Right ventricle myocardium superior (tissue), 1 donor: ENCODE measurements at regions of chr1 and their contacts with region 1.

Region 1: DNA sequence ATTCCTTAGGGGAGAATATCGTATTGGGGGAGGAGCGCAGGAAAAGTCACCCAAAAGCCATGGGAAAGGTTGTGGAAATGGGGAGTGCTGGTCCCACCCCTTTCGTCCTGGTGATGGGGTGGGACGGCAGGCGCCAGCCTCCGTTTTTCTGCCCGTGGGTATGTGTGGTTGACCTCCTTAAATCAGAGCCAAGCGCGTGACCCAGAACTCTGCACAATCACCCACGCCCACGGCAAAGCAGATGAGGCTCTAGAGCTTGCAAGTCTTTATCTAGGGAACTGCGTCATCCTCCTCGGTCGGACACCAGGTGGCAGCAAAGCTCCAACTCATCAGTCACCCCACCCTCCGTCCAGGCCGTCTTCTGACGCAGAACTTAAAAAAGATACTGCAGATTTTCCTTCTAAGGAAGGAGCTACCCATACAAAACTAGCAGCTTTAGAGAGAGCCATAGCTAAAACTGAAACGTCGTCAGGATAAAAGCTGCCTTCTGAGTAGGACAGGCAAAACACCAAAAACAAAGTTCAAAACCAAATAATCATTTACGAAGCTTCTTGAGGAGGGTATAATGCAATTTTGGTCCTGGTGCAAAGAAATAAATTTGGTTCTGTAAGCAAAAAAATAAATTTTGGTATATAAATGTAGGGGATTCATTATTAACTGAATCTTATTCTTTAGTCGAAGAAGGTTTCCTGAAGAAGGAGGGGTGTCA is 62.0 kb downstream of the TBX19 start:
- DNase-seq: peak; percentile 92
- ATAC-seq: peak; percentile 99

Region 2: DNA sequence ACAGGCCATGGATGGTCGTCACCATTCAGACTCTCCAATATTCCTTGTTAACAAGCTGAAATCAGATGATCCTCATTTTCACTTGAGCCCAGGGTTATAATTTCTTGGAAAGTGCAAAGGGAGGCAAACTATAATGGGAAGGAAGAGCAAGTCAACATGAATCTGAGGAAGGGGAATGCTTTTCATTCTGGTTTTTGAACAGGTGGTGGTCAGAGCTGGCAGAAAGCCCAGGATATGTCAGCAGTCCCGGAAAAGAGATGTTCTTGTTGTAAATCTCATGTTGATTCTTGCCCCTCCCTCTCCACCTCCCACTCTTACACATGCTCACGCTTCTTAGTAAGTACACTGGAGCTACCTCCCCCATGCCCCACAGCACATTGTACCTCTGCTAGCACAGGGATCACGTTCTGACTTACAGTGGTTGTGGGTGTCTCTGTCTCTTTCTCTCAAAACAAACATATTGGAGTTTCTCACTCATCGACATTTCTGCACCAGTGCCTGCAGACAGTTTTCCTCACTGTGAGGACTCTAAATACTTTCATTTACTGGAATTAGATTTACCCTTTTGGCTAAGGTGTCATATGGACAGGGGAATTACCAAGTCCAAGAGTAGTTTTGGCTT is 123.5 kb after region 1 on chr1:
- intact Hi-C with region 1: no loop called
- DNase-seq: peak; percentile 44
- ATAC-seq: peak; percentile 38

Region 3: GRCh38 chr1:169348383-169349036 is 1005.8 kb after region 1 on chr1:
- intact Hi-C with region 1: loop called (anchors 5 kb)
- DNase-seq: no peak
- ATAC-seq: no peak